CD4-positive, alpha-beta T cell (primary cell): ENCODE measurements at regions of chr19 and their contacts with region 1.

Region 1: GRCh38 chr19:18919086-18919899 is at the starts of genes COPE and DDX49:
- DNase-seq: peak; percentile 92 to 100 (median 97)
- ATAC-seq: peak; percentile 94
- H3K4me3 ChIP-seq: peak within 1 kb of the TSS; percentile 65
- H3K4me3 Mint-ChIP-seq: peak within 1 kb of the TSS; percentile 84
- H3K27ac ChIP-seq: peak within 1 kb of the TSS; percentile 92
- H3K27ac Mint-ChIP-seq: peak within 1 kb of the TSS; percentile 66
- H3K4me1 ChIP-seq: peaks cover 47% of the 10 kb centered on the region
- H3K4me1 Mint-ChIP-seq: peaks cover 42% of the 10 kb centered on the region
- H3K27me3 ChIP-seq: no peaks in the 10 kb centered on the region
- H3K27me3 Mint-ChIP-seq: no peaks in the 10 kb centered on the region
- CTCF ChIP-seq: no peak
- total RNA-seq, gene COPE: 135 to 143 TPM
- total RNA-seq, gene DDX49: 47.9 to 49.7 TPM

Region 2: DNA sequence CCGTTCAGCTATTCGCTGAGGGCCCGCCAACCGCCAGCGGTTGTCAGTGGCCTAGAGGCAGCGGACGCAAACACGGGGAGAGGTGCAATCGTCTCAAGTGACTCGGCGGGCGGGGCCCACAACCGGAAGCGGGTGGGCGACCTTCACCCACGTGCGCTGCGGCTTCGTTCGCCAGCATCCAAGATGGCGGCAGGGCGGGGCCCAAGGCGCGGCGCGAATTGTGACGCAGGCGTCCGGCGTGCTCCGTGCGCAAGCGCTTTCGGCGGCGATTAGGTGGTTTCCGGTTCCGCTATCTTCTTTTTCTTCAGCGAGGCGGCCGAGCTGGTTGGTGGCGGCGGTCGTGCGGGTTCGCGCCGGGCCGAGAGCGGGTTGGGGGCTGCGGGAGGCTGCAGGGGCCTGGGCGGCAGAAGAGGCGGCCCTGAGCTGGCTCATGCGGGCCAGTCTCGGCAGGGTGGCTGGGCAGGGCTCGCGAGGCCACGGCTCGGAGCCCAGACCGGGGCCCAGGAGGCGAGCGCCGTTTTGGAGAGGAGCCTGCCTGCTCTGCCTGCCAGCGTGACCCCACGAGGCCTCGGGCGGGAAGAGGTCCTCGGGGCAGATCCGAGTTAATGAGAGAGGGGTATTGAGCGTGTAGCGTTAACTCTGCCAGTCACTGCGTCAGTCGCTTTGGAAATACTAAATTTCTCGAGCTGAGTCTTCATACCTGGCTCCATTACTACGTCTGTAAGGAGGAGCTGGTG is 347.6 kb before region 1 on chr19 and contains the start of gene UBA52:
- CTCF ChIA-PET with region 1: no interaction called
- POLR2A ChIA-PET with region 1: interaction called, 23 read pairs
- intact Hi-C with region 1: loop called in 1 of 2 experiments (anchors 1 kb)
- DNase-seq: peak; percentile 96 to 100 (median 98)
- ATAC-seq: peak; percentile 91
- H3K4me3 ChIP-seq: peak within 1 kb of the TSS; percentile 97
- H3K4me3 Mint-ChIP-seq: peak within 1 kb of the TSS; percentile 91
- H3K27ac ChIP-seq: peak within 1 kb of the TSS; percentile 89 to 94
- H3K27ac Mint-ChIP-seq: peak within 1 kb of the TSS; percentile 93
- H3K4me1 ChIP-seq: peaks cover 28% of the 10 kb centered on the region
- H3K4me1 Mint-ChIP-seq: peaks cover 20% of the 10 kb centered on the region
- H3K27me3 ChIP-seq: no peaks in the 10 kb centered on the region
- H3K27me3 Mint-ChIP-seq: no peaks in the 10 kb centered on the region
- CTCF ChIP-seq: no peak
- total RNA-seq, gene UBA52: 2,255 to 2,378 TPM

Region 3: GRCh38 chr19:18636183-18636968 is 282.9 kb before region 1 on chr19:
- CTCF ChIA-PET with region 1: no interaction called
- POLR2A ChIA-PET with region 1: no interaction called
- intact Hi-C with region 1: loop called in 1 of 2 experiments (anchors 1 kb)
- DNase-seq: peak; percentile 98 to 100 (median 99)
- ATAC-seq: peak; percentile 86
- H3K4me3 ChIP-seq: peak overlapping the region; percentile 81
- H3K4me3 Mint-ChIP-seq: peak overlapping the region; percentile 91
- H3K27ac ChIP-seq: peak overlapping the region; percentile 39 to 72
- H3K27ac Mint-ChIP-seq: peak overlapping the region; percentile 83
- H3K4me1 ChIP-seq: peaks cover 34% of the 10 kb centered on the region
- H3K4me1 Mint-ChIP-seq: peaks cover 35% of the 10 kb centered on the region
- H3K27me3 ChIP-seq: no peaks in the 10 kb centered on the region
- H3K27me3 Mint-ChIP-seq: no peaks in the 10 kb centered on the region
- CTCF ChIP-seq: no peak

Region 4: DNA sequence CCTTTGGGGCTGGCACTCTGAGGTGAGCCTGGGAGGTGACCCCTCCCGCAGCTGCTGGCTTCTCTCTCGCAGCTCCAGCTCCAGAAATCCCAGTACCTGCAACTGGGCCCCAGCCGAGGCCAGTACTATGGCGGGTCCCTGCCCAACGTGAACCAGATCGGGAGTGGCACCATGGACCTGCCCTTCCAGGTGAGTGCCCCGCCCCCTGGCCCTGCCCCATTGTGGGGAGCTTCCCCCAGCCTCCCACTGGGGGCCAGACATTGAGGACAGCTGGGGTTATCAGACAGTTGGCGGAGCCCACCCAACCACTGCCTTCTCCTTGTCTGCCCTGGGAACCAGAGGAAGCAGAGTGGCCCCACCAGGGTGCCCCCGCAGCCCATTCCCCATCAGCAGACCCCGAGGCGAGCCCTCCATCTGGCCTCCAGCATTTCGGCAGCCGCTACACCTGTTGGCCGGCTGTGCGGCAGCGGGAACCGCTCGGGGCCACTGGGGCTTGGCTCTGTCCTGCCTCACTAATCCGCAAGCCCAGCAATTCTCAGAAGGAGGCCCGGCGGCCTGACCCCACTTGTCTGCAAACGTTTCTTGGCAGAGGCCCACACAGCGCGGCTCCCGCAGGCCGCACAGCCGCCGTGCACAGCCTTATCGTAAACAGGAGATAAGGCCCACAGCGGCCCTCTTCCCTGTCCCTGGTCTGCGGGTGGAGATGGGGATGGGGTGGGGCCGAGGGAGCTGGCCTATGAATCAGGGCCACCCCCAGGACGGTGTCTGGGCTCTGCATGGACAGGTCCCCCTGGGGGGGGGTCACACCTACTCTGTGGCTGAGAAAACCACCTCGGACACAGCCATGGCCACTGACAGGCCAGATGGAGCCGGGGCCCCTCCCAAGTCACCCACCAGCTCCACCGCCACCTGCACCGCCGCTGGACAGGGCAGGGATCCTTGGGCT is 176.2 kb before region 1 on chr19:
- CTCF ChIA-PET with region 1: no interaction called
- POLR2A ChIA-PET with region 1: no interaction called
- intact Hi-C with region 1: no loop called
- DNase-seq: no peak
- ATAC-seq: no peak
- H3K4me3 ChIP-seq: no peak overlapping the region
- H3K4me3 Mint-ChIP-seq: no peak overlapping the region
- H3K27ac ChIP-seq: no peak overlapping the region
- H3K27ac Mint-ChIP-seq: no peak overlapping the region
- H3K4me1 ChIP-seq: no peaks in the 10 kb centered on the region
- H3K4me1 Mint-ChIP-seq: no peaks in the 10 kb centered on the region
- H3K27me3 ChIP-seq: no peaks in the 10 kb centered on the region
- H3K27me3 Mint-ChIP-seq: no peaks in the 10 kb centered on the region
- CTCF ChIP-seq: no peak

Region 5: GRCh38 chr19:18831524-18832305 is 87.6 kb before region 1 on chr19 and contains the start of gene UPF1:
- CTCF ChIA-PET with region 1: interaction called, 3 read pairs
- POLR2A ChIA-PET with region 1: interaction called, 11 read pairs
- intact Hi-C with region 1: loop called in 1 of 2 experiments (anchors 5 kb)
- DNase-seq: peak; percentile 90 to 99 (median 96)
- ATAC-seq: peak; percentile 75
- H3K4me3 ChIP-seq: peak within 1 kb of the TSS; percentile 64
- H3K4me3 Mint-ChIP-seq: peak within 1 kb of the TSS; percentile 89
- H3K27ac ChIP-seq: peak within 1 kb of the TSS; percentile 64 to 81
- H3K27ac Mint-ChIP-seq: peak within 1 kb of the TSS; percentile 88
- H3K4me1 ChIP-seq: peaks cover 45% of the 10 kb centered on the region
- H3K4me1 Mint-ChIP-seq: peaks cover 39% of the 10 kb centered on the region
- H3K27me3 ChIP-seq: no peaks in the 10 kb centered on the region
- H3K27me3 Mint-ChIP-seq: no peaks in the 10 kb centered on the region
- CTCF ChIP-seq: no peak
- total RNA-seq, gene UPF1: 146 to 150 TPM

Region 6: DNA sequence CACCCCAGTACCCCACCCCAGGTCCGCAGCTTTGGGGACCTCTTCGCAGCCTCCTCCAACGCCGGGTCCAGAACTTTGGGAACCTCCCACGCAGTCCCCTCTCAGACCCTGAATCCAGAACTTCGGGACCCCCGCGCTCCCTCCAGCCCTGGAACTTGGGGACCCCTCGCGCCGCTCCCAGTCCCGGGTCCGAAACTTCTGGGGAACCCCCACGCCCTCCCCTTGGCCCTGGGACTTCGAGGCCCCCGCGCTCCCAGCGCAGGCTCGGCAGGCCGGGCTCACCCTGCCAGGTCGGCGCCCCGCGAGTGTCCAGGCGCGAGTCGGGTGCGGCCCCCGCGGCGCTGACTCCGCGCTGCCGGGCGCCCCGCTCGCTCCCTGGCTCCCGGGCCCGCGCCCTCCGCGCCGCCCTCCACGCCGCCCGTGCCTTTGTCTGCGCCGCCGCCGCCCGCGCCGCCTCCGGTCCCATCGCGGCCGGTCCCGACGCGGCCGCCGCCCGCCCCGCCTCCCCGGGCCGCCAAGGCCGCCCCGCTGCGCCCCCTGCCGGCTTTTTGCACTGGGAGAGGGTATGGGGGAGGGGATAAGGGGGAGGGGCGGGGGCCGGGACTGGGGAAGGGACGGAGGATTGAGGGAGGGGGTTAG is 21.6 kb after region 1 on chr19 and contains the start of gene HOMER3:
- CTCF ChIA-PET with region 1: no interaction called
- POLR2A ChIA-PET with region 1: no interaction called
- intact Hi-C with region 1: loop called in 1 of 2 experiments (anchors 2 kb)
- DNase-seq: peak; percentile 58 to 89 (median 76)
- ATAC-seq: peak; percentile 91
- H3K4me3 ChIP-seq: peak within 1 kb of the TSS; percentile 46
- H3K4me3 Mint-ChIP-seq: peak within 1 kb of the TSS; percentile 60
- H3K27ac ChIP-seq: no peak within 1 kb of the TSS
- H3K27ac Mint-ChIP-seq: no peak within 1 kb of the TSS
- H3K4me1 ChIP-seq: peaks cover 18% of the 10 kb centered on the region
- H3K4me1 Mint-ChIP-seq: peaks cover 9% of the 10 kb centered on the region
- H3K27me3 ChIP-seq: peaks cover 16 to 22% of the 10 kb centered on the region in 2 experiments
- H3K27me3 Mint-ChIP-seq: peaks cover 32% of the 10 kb centered on the region
- CTCF ChIP-seq: no peak
- total RNA-seq, gene HOMER3: 1.1 TPM

Region 7: GRCh38 chr19:19320362-19321142 is 401.3 kb after region 1 on chr19 and contains the starts of genes MAU2 and SUGP1:
- CTCF ChIA-PET with region 1: no interaction called
- POLR2A ChIA-PET with region 1: no interaction called
- intact Hi-C with region 1: loop called in 1 of 2 experiments (anchors 5 kb)
- DNase-seq: peak; percentile 81 to 96 (median 88)
- ATAC-seq: peak; percentile 88
- H3K4me3 ChIP-seq: peak within 1 kb of the TSS; percentile 71
- H3K4me3 Mint-ChIP-seq: peak within 1 kb of the TSS; percentile 100
- H3K27ac ChIP-seq: peak within 1 kb of the TSS; percentile 92 to 95
- H3K27ac Mint-ChIP-seq: peak within 1 kb of the TSS; percentile 99
- H3K4me1 ChIP-seq: peaks cover 57% of the 10 kb centered on the region
- H3K4me1 Mint-ChIP-seq: peaks cover 43% of the 10 kb centered on the region
- H3K27me3 ChIP-seq: no peaks in the 10 kb centered on the region
- H3K27me3 Mint-ChIP-seq: no peaks in the 10 kb centered on the region
- CTCF ChIP-seq: peak; percentile 16
- total RNA-seq, gene MAU2: 132 to 133 TPM
- total RNA-seq, gene SUGP1: 49.7 to 56.0 TPM